IMR-90 (cell line): ENCODE measurements at regions of chr17 and their contacts with region 1.

Region 1: DNA sequence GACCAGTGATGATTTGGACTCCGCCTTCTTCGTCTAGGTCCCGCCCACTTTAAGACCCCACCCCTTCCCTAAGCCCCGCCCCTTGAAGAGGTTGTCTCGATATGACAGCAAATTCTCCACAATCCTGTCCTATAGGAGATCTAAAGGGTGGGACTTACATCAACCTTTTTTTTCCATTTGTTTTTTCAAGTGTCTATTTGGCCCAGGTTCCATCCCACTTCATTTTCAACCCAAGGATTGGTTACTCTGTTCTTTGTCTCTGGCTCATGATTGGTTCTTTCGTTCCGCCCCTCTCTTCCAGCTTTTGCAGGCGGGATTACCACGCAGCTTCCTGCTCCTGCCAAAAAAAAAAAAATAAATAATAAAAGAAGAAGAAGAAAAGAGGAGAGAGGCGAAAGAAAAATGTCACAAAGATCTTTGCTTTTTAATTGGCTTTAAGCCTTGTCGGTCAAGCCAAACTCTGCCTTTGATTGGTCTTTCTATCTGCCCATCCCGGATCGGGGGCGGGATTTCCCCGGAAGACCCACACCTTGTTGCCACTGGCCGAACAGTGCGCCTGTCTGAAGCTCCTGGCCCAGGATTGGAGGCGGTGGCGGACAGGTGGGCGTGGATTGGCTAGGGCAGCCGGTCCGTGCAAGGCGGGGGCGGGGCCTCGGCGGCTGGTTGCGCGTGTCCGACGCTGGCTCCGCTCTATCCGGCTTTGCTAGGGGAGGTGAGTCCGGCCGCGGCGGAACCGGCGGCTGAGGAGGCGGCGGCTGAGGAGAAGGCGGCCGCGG is 1.2 kb upstream of the NLK start:
- DNase-seq: peak; percentile 99
- ATAC-seq: peak; percentile 94
- H3K4me3 ChIP-seq: peak overlapping the region; percentile 71
- H3K27ac ChIP-seq: peak overlapping the region; percentile 63; the same call in 1 of the 2 replicates
- H3K4me1 ChIP-seq: peaks cover 8% of the 10 kb centered on the region
- H3K27me3 ChIP-seq: no peaks in the 10 kb centered on the region
- CTCF ChIP-seq: no peak
- POLR2A ChIP-seq: peak; percentile 82
- RAD21 ChIP-seq: no peak

Region 2: DNA sequence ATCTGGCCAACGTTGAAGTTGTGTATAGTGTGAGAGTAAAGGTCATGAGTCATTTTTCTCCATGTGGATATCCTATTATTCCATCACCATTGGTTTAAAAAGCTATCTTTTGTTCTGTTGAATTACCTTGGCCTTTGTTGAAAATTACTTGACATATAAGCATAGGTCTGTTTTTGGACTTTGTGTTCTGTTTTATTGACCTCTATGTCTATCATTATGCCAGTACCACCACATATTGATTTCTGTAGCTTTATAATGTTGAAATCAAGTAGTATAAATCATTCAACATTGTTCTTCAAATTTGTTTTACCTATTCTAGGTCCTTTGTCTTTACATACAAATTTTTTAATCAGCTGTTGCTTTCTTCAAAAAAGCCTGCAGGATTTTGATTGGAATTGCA is 59.7 kb after region 1 on chr17:
- CTCF ChIA-PET with region 1: no interaction called
- POLR2A ChIA-PET with region 1: no interaction called
- dilution Hi-C with region 1: no loop called
- in situ Hi-C with region 1: no loop called
- intact Hi-C with region 1: loop called (anchors 5 kb)
- DNase-seq: no peak
- ATAC-seq: no peak
- H3K4me3 ChIP-seq: no peak overlapping the region
- H3K27ac ChIP-seq: no peak overlapping the region
- H3K4me1 ChIP-seq: 0 out of 2 replicates have a peak, but pooled peaks cover 2% of the 10 kb centered on the region
- H3K27me3 ChIP-seq: no peaks in the 10 kb centered on the region
- CTCF ChIP-seq: no peak
- POLR2A ChIP-seq: no peak
- RAD21 ChIP-seq: no peak

Region 3: GRCh38 chr17:28180449-28180848 is 139.2 kb after region 1 on chr17:
- CTCF ChIA-PET with region 1: no interaction called
- POLR2A ChIA-PET with region 1: interaction called, 3 read pairs
- dilution Hi-C with region 1: no loop called
- in situ Hi-C with region 1: no loop called
- intact Hi-C with region 1: loop called (anchors 5 kb)
- DNase-seq: peak; percentile 69
- ATAC-seq: peak; percentile 73
- H3K4me3 ChIP-seq: no peak overlapping the region
- H3K27ac ChIP-seq: peak overlapping the region; percentile 54; the same call in 1 of the 2 replicates
- H3K4me1 ChIP-seq: peaks cover 2% of the 10 kb centered on the region; the same call in 1 of the 2 replicates
- H3K27me3 ChIP-seq: no peaks in the 10 kb centered on the region
- CTCF ChIP-seq: no peak
- POLR2A ChIP-seq: no peak
- RAD21 ChIP-seq: no peak

Region 4: GRCh38 chr17:28327031-28327607 is 285.9 kb after region 1 on chr17:
- CTCF ChIA-PET with region 1: no interaction called
- POLR2A ChIA-PET with region 1: no interaction called
- dilution Hi-C with region 1: no loop called
- in situ Hi-C with region 1: loop called (anchors 10 kb)
- intact Hi-C with region 1: loop called (anchors 10 kb)
- DNase-seq: peak; percentile 52
- ATAC-seq: no peak
- H3K4me3 ChIP-seq: no peak overlapping the region
- H3K27ac ChIP-seq: no peak overlapping the region
- H3K4me1 ChIP-seq: peaks cover 6% of the 10 kb centered on the region; the same call in 1 of the 2 replicates
- H3K27me3 ChIP-seq: no peaks in the 10 kb centered on the region
- CTCF ChIP-seq: no peak
- POLR2A ChIP-seq: no peak
- RAD21 ChIP-seq: no peak